CD4-positive, alpha-beta T cell (primary cell): ENCODE measurements at regions of chr12 and their contacts with region 1.

Region 1: DNA sequence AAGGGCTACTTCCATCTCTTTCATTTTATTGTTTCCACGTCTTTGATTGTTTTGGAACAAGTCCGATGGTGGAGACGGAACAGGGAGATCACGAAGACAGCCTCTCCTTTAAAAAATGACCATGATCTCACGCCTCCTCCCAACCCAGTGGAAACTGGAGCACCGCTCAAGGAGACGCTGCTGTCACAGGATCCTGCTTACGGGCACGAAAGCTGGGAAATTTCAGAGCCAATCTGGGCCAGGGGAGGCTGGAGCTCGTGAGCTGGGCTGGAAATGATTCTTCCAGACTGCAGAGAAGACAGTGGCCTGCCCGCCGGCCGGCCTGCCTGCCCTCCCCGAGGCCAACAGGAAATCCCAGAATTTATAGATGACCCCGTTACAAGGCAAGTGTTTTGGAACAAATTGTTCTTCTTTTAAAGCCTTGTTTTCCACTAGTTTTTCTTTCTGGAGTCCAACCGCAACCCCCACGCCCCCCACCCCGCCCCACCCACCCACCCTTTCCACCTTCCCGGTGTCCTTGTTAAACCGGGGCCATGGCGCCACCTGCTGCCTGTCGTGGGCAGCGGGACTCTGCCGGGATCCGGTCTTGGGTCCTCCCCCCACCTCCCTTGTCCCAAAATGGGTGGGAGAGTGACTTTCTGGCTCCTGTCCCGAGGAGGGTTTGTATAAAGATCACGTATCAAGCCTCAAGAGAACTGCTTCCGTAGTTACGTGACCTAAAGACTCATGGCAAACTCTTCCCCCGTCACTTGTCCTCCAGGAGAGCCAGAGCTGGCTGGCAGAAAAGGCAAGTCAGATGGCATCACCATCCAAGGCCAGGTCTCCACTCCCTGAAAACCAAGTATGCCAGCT is 40.3 kb downstream of the MAP1LC3B2 start:
- DNase-seq: peak; percentile 44 to 77 (median 58)
- ATAC-seq: peak; percentile 64
- H3K4me3 ChIP-seq: peak overlapping the region; percentile 4
- H3K4me3 Mint-ChIP-seq: no peak overlapping the region
- H3K27ac ChIP-seq: no peak overlapping the region
- H3K27ac Mint-ChIP-seq: no peak overlapping the region
- H3K4me1 ChIP-seq: peaks cover 23% of the 10 kb centered on the region
- H3K4me1 Mint-ChIP-seq: peaks cover 36% of the 10 kb centered on the region
- H3K27me3 ChIP-seq: no peaks in the 10 kb centered on the region
- H3K27me3 Mint-ChIP-seq: no peaks in the 10 kb centered on the region
- CTCF ChIP-seq: peak; percentile 67

Region 2: GRCh38 chr12:115998119-115998633 is 601.3 kb before region 1 on chr12:
- CTCF ChIA-PET with region 1: no interaction called
- POLR2A ChIA-PET with region 1: no interaction called
- intact Hi-C with region 1: loop called in 1 of 2 experiments (anchors 2 kb)
- DNase-seq: peak in 4 of 14 experiments; percentile 35 to 69 (median 56)
- ATAC-seq: peak; percentile 46
- H3K4me3 ChIP-seq: no peak overlapping the region
- H3K4me3 Mint-ChIP-seq: no peak overlapping the region
- H3K27ac ChIP-seq: no peak overlapping the region
- H3K27ac Mint-ChIP-seq: peak overlapping the region; percentile 54
- H3K4me1 ChIP-seq: peaks cover 3% of the 10 kb centered on the region
- H3K4me1 Mint-ChIP-seq: peaks cover 26% of the 10 kb centered on the region
- H3K27me3 ChIP-seq: no peaks in the 10 kb centered on the region
- H3K27me3 Mint-ChIP-seq: no peaks in the 10 kb centered on the region
- CTCF ChIP-seq: peak; percentile 94

Region 3: DNA sequence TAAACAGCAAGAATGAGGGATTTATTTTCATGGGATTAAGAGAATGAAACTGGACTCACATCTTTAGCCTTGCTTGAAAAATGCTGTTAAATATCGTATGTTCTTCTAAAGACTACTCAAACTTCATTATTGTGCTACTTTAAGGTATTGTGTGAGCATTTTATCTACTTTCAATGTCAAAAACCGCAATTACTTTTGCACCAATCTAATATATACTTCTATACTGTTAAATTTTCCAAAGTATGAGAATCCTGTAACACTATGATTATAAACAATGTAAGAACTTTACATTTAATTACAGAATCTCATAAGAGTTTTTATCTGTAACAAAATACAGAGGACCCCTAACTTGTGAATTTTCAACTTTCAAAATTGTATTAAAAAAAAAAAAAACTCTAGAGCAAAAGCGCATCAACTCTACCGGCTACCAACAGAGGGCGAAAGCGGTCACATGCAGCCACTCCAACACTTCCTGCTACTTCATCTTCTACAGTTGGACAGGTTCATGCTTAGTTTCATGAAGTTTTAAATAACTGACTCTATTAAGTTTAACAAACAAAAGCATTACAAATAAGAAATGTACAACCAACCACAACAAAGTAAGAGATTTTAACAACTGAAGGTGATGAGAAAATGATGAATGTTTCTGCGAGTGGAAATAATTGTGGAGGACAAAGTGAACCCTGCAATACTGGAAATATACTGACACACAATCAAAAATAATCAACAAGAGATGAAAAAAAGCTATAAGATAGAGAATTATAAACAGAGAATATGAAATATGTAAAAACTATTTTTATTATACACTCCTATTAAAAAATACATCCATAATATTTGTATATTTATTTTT is 532.9 kb before region 1 on chr12:
- CTCF ChIA-PET with region 1: no interaction called
- POLR2A ChIA-PET with region 1: no interaction called
- intact Hi-C with region 1: loop called in 1 of 2 experiments (anchors 2 kb)
- DNase-seq: peak; percentile 32 to 80 (median 44)
- ATAC-seq: peak; percentile 89
- H3K4me3 ChIP-seq: no peak overlapping the region
- H3K4me3 Mint-ChIP-seq: no peak overlapping the region
- H3K27ac ChIP-seq: no peak overlapping the region
- H3K27ac Mint-ChIP-seq: no peak overlapping the region
- H3K4me1 ChIP-seq: no peaks in the 10 kb centered on the region
- H3K4me1 Mint-ChIP-seq: peaks cover 77% of the 10 kb centered on the region
- H3K27me3 ChIP-seq: no peaks in the 10 kb centered on the region
- H3K27me3 Mint-ChIP-seq: no peaks in the 10 kb centered on the region
- CTCF ChIP-seq: peak; percentile 90

Region 4: GRCh38 chr12:116142936-116143898 is 456.3 kb before region 1 on chr12:
- CTCF ChIA-PET with region 1: interaction called, 3 read pairs
- POLR2A ChIA-PET with region 1: no interaction called
- intact Hi-C with region 1: loop called (anchors 2 to 5 kb)
- DNase-seq: peak in 3 of 14 experiments; percentile 25 to 32 (median 28)
- ATAC-seq: peak; percentile 26
- H3K4me3 ChIP-seq: no peak overlapping the region
- H3K4me3 Mint-ChIP-seq: peak overlapping the region; percentile 13
- H3K27ac ChIP-seq: no peak overlapping the region
- H3K27ac Mint-ChIP-seq: peak overlapping the region; percentile 13
- H3K4me1 ChIP-seq: peaks cover 15% of the 10 kb centered on the region
- H3K4me1 Mint-ChIP-seq: peaks cover 50% of the 10 kb centered on the region
- H3K27me3 ChIP-seq: no peaks in the 10 kb centered on the region
- H3K27me3 Mint-ChIP-seq: no peaks in the 10 kb centered on the region
- CTCF ChIP-seq: no peak

Region 5: DNA sequence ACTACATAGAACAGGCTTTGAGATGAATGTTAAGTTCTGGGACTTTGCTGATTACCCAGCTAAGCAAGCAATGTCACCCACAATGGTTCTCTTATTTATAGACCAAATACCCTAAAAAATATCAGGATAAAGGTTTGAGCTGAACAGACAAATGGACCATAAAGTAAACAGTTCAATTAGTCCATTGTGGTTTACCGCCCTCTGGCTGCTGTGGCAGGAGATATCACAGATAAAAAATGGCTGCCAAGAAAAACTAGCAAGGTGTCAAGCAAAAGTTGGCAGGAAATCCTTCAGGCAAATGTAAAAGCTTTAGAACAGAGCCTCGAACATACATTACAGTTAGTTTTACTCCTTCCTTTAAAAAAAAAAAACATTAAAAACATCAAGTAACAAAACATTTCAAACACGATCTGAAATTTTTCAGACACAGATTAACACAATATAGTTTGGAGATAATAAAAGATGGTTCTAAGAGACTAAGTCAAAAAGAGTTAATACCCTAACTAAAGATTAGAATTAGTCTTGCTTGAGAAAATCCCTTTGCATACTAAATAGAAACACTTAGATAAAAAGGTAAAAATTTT is 363.3 kb before region 1 on chr12:
- CTCF ChIA-PET with region 1: no interaction called
- POLR2A ChIA-PET with region 1: no interaction called
- intact Hi-C with region 1: loop called in 1 of 2 experiments (anchors 5 kb)
- DNase-seq: peak; percentile 15 to 76 (median 31)
- ATAC-seq: peak; percentile 89
- H3K4me3 ChIP-seq: no peak overlapping the region
- H3K4me3 Mint-ChIP-seq: peak overlapping the region; percentile 3
- H3K27ac ChIP-seq: peak overlapping the region in 1 of 2 donors; percentile 22
- H3K27ac Mint-ChIP-seq: peak overlapping the region; percentile 46
- H3K4me1 ChIP-seq: peaks cover 7% of the 10 kb centered on the region
- H3K4me1 Mint-ChIP-seq: peaks cover 61% of the 10 kb centered on the region
- H3K27me3 ChIP-seq: no peaks in the 10 kb centered on the region
- H3K27me3 Mint-ChIP-seq: no peaks in the 10 kb centered on the region
- CTCF ChIP-seq: peak; percentile 74

Region 6: DNA sequence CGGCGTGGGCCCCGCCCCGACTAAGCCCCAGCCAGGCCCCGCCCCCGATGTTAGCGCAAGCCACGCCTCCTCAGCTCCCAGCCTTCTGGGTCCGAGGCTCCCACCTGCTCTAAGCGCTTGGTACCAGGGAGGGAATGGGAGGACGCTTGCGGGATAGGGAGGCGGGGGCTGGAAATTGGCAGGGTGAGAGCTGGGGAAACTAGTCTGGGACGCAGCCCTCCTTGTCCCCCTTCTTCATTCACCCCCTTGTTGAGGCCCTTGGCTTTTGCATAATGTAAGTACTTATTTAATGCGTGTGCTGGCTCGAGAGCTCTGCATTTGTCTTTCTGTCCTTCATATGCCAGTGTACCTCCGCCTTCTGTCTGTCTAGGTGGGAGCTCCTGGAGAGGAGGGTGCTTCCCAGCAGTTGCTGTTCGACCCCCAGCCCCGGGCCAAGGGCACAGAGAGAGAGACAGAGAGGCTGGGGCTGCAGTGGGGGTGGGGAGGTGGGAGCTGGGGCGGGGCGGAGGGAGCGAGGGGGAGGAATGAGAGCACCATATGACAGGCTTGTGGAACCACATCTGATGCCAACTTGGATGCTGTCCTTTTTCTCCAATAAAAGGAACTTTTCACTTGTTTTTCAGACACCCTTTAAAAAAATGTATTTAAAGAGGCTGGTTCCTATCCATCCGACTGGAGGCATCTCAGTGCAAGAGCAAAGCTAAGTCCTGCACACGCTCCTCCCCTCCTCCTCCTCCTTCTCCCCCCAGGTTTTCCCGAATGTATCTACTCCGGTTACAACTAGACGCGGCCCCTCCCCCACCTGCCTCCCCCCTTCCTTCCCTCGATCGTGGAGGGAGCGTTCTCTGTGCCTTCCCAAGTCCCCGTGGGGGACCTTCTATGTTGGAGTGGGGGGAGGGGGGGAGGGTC is 65.9 kb before region 1 on chr12:
- CTCF ChIA-PET with region 1: no interaction called
- POLR2A ChIA-PET with region 1: no interaction called
- intact Hi-C with region 1: loop called in 1 of 2 experiments (anchors 5 kb)
- DNase-seq: peak; percentile 58 to 89 (median 70)
- ATAC-seq: peak; percentile 91
- H3K4me3 ChIP-seq: peak overlapping the region; percentile 67
- H3K4me3 Mint-ChIP-seq: peak overlapping the region; percentile 89
- H3K27ac ChIP-seq: no peak overlapping the region
- H3K27ac Mint-ChIP-seq: peak overlapping the region; percentile 22
- H3K4me1 ChIP-seq: peaks cover 28% of the 10 kb centered on the region
- H3K4me1 Mint-ChIP-seq: peaks cover 28% of the 10 kb centered on the region
- H3K27me3 ChIP-seq: no peaks in the 10 kb centered on the region
- H3K27me3 Mint-ChIP-seq: no peaks in the 10 kb centered on the region
- CTCF ChIP-seq: no peak

Region 7: DNA sequence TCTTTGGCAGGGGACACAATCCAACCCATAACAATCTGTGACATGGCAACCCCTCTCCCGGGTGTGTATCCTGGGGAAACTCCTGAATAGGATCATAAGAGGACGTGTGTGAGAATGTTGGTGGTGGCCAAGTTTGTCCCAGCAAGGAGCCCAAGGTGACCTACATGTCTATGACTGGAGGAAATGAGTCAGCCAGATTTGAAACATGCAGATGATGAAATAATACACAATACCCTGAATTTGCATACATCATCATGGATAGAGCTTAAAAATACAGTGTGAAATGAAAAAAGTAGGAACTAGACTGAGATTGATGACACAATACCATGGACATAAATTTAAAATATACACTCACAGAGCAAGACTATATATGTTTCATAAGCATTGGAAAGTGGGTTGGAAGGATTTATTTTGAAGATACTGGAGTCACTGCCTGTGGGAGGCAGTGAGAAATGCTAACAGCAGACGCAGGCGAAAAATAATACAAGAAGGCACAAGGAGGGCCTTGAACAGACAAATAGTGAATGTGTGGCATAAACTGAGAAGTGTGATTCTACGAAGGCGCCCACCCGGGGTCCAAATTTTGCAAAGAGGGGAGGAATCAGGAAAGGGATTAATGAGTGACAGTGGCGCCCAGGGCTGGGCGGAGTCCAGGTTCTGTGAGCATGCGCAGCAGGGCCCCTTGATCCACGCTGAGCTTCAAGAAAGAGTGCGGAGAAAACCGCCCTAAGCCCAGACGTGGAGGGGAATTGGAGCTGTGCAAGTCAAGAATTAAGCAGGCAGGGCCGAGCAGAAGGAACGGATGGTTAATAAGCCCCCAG is 47.3 kb before region 1 on chr12:
- CTCF ChIA-PET with region 1: no interaction called
- POLR2A ChIA-PET with region 1: no interaction called
- intact Hi-C with region 1: loop called in 1 of 2 experiments (anchors 5 kb)
- DNase-seq: peak in 3 of 14 experiments; percentile 8 to 74 (median 62)
- ATAC-seq: no peak
- H3K4me3 ChIP-seq: no peak overlapping the region
- H3K4me3 Mint-ChIP-seq: no peak overlapping the region
- H3K27ac ChIP-seq: no peak overlapping the region
- H3K27ac Mint-ChIP-seq: no peak overlapping the region
- H3K4me1 ChIP-seq: peaks cover 8% of the 10 kb centered on the region
- H3K4me1 Mint-ChIP-seq: peaks cover 30% of the 10 kb centered on the region
- H3K27me3 ChIP-seq: no peaks in the 10 kb centered on the region
- H3K27me3 Mint-ChIP-seq: no peaks in the 10 kb centered on the region
- CTCF ChIP-seq: no peak

Region 8: DNA sequence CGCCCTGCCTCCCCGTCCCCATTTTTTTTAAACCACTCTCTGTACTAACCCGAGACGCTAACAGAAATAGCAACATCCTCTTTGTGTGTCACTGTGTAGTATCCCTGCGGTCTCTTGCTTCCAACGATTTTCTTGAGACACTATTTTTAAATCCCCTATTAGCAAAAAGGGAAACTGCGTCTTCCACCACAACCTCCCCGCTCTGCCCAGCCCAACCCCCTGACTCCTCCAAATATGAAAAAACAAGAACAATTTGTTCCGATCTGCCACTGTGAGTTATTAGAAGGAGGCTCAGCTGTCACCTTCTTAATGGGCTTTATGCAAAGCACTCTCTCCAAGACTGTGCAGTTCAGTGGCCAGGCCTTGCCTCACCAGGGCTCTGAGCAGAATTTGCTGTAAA is 36.0 kb after region 1 on chr12:
- CTCF ChIA-PET with region 1: no interaction called
- POLR2A ChIA-PET with region 1: no interaction called
- intact Hi-C with region 1: no loop called
- DNase-seq: peak in 2 of 14 experiments; percentile 4 to 15
- ATAC-seq: no peak
- H3K4me3 ChIP-seq: no peak overlapping the region
- H3K4me3 Mint-ChIP-seq: no peak overlapping the region
- H3K27ac ChIP-seq: no peak overlapping the region
- H3K27ac Mint-ChIP-seq: no peak overlapping the region
- H3K4me1 ChIP-seq: no peaks in the 10 kb centered on the region
- H3K4me1 Mint-ChIP-seq: no peaks in the 10 kb centered on the region
- H3K27me3 ChIP-seq: peaks cover 3 to 6% of the 10 kb centered on the region in 2 experiments
- H3K27me3 Mint-ChIP-seq: peaks cover 18% of the 10 kb centered on the region
- CTCF ChIP-seq: no peak

Region 9: DNA sequence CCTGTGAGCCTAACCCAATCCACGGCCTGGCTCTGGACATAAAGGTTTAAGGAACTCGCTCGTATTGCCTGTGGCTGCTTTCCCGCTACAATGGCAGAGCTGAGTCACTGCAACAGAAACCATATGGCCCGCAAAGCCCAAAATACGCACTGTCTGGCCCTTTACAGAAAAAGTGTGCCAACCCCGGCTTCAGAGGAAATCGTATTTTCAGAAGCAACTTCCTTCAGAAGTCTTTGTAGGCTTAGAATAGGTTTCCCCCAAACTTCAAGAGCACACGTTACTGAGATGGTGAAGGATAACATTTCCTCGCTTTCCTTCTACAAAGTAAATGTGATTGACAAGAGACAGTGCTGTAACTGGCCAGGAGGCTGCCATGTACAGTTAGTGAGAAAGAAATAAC is 534.5 kb after region 1 on chr12:
- CTCF ChIA-PET with region 1: no interaction called
- POLR2A ChIA-PET with region 1: no interaction called
- intact Hi-C with region 1: no loop called
- DNase-seq: peak in 9 of 14 experiments; percentile 19 to 75 (median 32)
- ATAC-seq: peak; percentile 83
- H3K4me3 ChIP-seq: no peak overlapping the region
- H3K4me3 Mint-ChIP-seq: peak overlapping the region; percentile 5
- H3K27ac ChIP-seq: no peak overlapping the region
- H3K27ac Mint-ChIP-seq: peak overlapping the region; percentile 18
- H3K4me1 ChIP-seq: peaks cover 18% of the 10 kb centered on the region
- H3K4me1 Mint-ChIP-seq: peaks cover 11% of the 10 kb centered on the region
- H3K27me3 ChIP-seq: no peaks in the 10 kb centered on the region
- H3K27me3 Mint-ChIP-seq: no peaks in the 10 kb centered on the region
- CTCF ChIP-seq: no peak